Activated naive CD4-positive, alpha-beta T cell treated with anti-CD3 and anti-CD28 coated beads for 36 hours (primary cell): ENCODE measurements at regions of chr5 and their contacts with region 1.

Region 1: DNA sequence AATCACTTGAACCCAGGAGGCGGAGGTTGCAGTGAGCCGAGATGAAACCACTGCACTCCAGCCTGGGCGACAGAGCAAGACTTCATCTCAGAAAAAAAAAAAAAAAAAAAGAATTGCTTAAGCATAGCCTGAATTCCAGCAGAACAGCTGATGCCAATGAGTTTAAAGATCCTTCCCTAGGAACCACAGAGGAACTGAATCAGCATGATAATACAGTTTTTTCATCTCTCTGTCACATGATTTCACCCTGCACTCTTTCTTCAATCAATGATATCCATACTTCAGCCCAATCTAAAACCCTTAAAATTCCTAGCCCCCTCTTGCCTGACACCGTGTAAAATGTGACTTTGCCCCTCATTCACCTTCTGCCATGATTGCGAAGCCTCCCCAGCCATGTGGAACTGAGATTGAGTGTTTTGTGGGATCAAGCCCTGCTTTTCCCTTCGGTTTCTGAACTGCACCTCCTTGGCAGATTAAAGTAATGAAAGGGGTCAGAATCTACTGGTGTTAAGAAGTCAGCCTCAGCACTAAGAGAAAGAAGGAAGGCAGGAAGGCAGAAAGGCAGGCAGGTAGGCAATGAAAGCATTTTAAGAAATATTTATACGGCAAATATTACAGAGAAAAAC is 20.9 kb upstream of the DMXL1 start:
- DNase-seq: no peak
- H3K4me3 Mint-ChIP-seq: no peak overlapping the region
- H3K27ac Mint-ChIP-seq: no peak overlapping the region
- H3K4me1 Mint-ChIP-seq: no peaks in the 10 kb centered on the region
- H3K27me3 Mint-ChIP-seq: no peaks in the 10 kb centered on the region

Region 2: DNA sequence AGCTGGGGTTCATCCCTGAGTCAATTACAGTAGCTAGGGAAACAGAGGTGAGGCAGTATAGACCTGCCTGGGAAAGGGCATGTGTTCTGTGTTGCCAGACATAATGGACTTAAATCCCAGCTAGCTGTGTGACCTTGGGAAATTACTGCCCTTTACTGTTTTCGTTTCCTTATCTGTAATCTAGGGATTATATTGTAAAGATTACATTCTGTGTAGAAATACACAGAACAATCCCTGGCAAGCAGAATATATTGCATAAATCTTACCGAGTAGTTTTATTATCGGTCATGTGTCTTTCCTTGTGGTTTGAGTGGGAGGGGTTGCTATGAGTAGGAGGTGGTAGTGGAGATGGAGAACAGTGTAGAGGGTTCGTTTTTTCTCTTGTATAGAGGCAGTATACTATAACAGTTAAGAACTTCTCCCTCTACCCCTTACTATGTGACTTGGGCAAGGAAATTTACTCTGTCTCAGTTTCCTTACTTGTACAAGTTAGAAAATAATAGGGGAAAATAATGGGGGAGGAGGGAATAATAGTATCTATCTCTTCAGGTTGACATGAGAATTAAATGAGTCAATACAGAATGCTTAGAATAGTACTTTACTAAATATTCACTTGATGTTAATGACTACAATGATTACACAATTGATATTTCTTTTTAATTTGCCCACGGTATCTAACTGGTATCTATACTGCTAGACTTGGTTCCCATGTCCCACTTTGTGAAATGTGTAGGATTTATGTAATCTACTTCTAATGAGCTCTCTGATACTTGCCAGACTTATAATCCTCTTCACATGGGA is 13.8 kb after region 1 on chr5:
- CTCF ChIA-PET with region 1: no interaction called
- intact Hi-C with region 1: loop called (anchors 2 kb)
- DNase-seq: peak; percentile 31
- H3K4me3 Mint-ChIP-seq: no peak overlapping the region
- H3K27ac Mint-ChIP-seq: no peak overlapping the region
- H3K4me1 Mint-ChIP-seq: peaks cover 13% of the 10 kb centered on the region
- H3K27me3 Mint-ChIP-seq: no peaks in the 10 kb centered on the region

Region 3: DNA sequence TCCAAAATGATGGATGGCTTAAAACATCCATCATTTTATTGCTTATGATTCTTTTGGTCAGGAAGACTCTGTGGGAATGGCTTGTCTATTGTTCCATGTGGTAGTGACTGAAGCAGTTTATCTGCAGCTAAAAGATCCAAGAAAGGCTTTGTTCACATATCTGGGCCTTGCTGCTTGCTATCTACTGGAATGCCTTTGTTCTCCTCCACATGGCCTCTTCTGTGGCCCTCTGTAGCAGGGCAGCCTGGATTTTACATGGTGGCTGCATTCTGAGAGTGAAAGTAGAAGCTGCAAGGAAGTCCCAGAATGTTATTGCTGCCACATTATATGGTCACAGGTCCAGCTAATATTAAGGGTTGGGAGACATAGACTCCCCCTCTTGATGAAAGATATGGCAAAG is 56.0 kb after region 1 on chr5:
- CTCF ChIA-PET with region 1: no interaction called
- intact Hi-C with region 1: no loop called
- DNase-seq: no peak
- H3K4me3 Mint-ChIP-seq: no peak overlapping the region
- H3K27ac Mint-ChIP-seq: no peak overlapping the region
- H3K4me1 Mint-ChIP-seq: peaks cover 2% of the 10 kb centered on the region
- H3K27me3 Mint-ChIP-seq: no peaks in the 10 kb centered on the region

Region 4: GRCh38 chr5:119168401-119168800 is 118.5 kb after region 1 on chr5:
- CTCF ChIA-PET with region 1: no interaction called
- intact Hi-C with region 1: no loop called
- DNase-seq: no peak
- H3K4me3 Mint-ChIP-seq: no peak overlapping the region
- H3K27ac Mint-ChIP-seq: no peak overlapping the region
- H3K4me1 Mint-ChIP-seq: peaks cover 3% of the 10 kb centered on the region
- H3K27me3 Mint-ChIP-seq: no peaks in the 10 kb centered on the region